Posterior cingulate gyrus (tissue), 11 donors: ENCODE measurements at regions of chr1 and their contacts with region 1.

Region 1: DNA sequence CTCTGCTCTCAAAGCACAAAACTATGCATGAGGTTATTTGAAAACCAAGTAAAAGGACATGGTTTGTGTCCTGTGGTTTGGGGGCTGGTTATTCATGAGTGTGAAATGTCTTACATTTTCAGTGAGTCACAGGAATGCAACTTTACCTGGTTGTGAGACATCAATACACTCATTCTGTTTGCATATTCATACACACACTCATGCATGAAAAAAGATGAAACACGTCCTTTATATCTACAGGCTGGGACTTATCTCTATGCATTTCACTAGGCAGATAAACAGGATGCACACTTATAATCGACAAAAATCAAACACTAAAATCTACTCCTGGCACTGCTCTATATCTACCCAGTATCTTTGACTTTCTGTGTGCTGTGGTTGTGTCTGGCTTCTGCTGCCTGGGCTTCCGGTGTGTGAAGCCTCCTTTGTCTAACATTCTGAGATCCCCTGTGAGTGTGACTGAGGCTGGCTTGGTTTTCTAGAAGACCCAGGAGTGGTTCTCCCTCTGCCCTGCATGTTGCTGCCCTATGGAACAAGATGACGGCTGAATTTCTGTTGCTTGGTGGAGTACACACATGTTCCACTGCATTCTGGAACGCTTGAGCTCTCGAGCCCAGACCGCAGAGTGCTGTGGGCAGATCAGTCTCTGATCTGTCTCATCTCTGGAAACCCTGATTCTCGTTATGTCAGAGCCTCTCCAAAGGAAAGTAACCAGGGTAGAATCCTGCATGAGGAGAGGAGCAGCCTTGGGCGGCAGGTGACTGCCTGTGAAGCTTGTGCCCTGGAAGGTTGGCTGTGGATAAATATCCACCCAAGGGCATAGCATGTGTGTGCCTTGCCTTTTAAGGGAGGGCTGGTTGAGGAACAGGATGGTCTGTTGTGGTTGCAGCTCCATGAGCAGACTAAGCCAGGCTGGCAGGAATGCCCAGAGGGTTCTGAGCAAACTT is 19.7 kb upstream of the FASLG start:
- DNase-seq: peak in 1 of 10 donors; percentile 78

Region 2: GRCh38 chr1:172670791-172671190 is 31.6 kb after region 1 on chr1:
- intact Hi-C with region 1: loop called (anchors 2 kb)
- DNase-seq: no peak

Region 3: DNA sequence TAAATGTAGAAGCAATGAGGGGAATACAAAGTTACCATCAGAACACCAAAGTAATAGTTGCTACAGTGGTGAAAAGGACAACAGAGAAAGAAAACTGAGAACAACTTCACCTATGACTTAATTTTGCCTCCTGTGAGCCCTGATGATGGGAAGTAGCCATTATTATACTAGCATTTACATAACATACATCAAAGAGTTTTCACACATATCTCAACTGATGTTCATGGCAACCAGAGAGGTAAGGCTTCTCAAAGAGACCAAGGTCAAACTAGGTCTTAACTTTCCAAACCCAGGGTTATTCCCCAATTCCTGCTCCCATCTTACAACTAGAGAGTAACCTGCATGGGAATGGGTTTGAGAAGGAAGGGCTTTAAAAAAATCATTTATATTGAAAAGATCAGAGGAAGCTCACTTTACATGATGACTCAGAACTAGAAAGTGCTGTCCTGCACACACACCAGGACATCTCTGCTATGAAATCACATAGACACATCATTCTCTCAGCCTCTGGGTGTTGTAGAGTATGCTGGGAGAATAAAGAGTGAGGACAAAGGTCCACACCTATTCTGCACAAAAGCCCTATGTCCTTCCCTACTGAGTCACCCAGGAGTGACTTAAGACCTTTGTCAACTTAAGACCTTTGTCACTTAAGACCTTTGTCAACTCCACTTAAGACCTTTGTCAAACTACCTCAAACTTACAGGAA is 231.9 kb after region 1 on chr1:
- intact Hi-C with region 1: no loop called
- DNase-seq: no peak